Activated CD4-positive, alpha-beta T cell treated with anti-CD3 and anti-CD28 coated beads, Interleukin-2, amount 10 ng/mL, durations not matched to agents 7 days and 5 days (primary cell): ENCODE measurements at regions of chr19 and their contacts with region 1.

Region 1: GRCh38 chr19:34386645-34387445 is 17.4 kb upstream of the PDCD2L start:
- DNase-seq: no peak
- H3K4me3 Mint-ChIP-seq: no peak overlapping the region
- H3K27ac Mint-ChIP-seq: no peak overlapping the region
- H3K4me1 Mint-ChIP-seq: no peaks in the 10 kb centered on the region
- H3K27me3 Mint-ChIP-seq: no peaks in the 10 kb centered on the region

Region 2: GRCh38 chr19:34399886-34400285 is 13.0 kb after region 1 on chr19:
- CTCF ChIA-PET with region 1: no interaction called
- POLR2A ChIA-PET with region 1: interaction called, 15 read pairs
- DNase-seq: no peak
- H3K4me3 Mint-ChIP-seq: no peak overlapping the region
- H3K27ac Mint-ChIP-seq: peak overlapping the region; percentile 46
- H3K4me1 Mint-ChIP-seq: peaks cover 12% of the 10 kb centered on the region
- H3K27me3 Mint-ChIP-seq: no peaks in the 10 kb centered on the region

Region 3: GRCh38 chr19:34416021-34416545 is 29.2 kb after region 1 on chr19:
- CTCF ChIA-PET with region 1: no interaction called
- POLR2A ChIA-PET with region 1: no interaction called
- DNase-seq: no peak
- H3K4me3 Mint-ChIP-seq: no peak overlapping the region
- H3K27ac Mint-ChIP-seq: no peak overlapping the region
- H3K4me1 Mint-ChIP-seq: peaks cover 4% of the 10 kb centered on the region
- H3K27me3 Mint-ChIP-seq: no peaks in the 10 kb centered on the region